SK-N-SH (cell line): ENCODE measurements at regions of chr4 and their contacts with region 1.

Region 1: GRCh38 chr4:173301518-173302201 is 32.5 kb downstream of the HMGB2 start:
- DNase-seq: peak; percentile 24
- H3K4me3 ChIP-seq: peak overlapping the region in 1 of 2 experiments; percentile 19; a peak in 1 of 4 replicates
- H3K27ac ChIP-seq: peak overlapping the region in 1 of 2 experiments; percentile 13; a peak in 1 of 4 replicates
- H3K4me1 ChIP-seq: peaks cover 0 to 5% of the 10 kb centered on the region in 2 experiments; a peak in 2 of 4 replicates
- H3K27me3 ChIP-seq: no peaks in the 10 kb centered on the region
- CTCF ChIP-seq: peak; percentile 86
- EP300 ChIP-seq: no peak
- RAD21 ChIP-seq: peak; percentile 78

Region 2: GRCh38 chr4:173019711-173020110 is 281.9 kb before region 1 on chr4:
- CTCF ChIA-PET with region 1: interaction called, 99 read pairs
- POLR2A ChIA-PET with region 1: no interaction called
- DNase-seq: no peak
- H3K4me3 ChIP-seq: no peak overlapping the region
- H3K27ac ChIP-seq: no peak overlapping the region
- H3K4me1 ChIP-seq: peaks cover 0 to 16% of the 10 kb centered on the region in 2 experiments; a peak in 1 of 4 replicates
- H3K27me3 ChIP-seq: no peaks in the 10 kb centered on the region
- CTCF ChIP-seq: no peak
- EP300 ChIP-seq: no peak
- RAD21 ChIP-seq: no peak

Region 3: DNA sequence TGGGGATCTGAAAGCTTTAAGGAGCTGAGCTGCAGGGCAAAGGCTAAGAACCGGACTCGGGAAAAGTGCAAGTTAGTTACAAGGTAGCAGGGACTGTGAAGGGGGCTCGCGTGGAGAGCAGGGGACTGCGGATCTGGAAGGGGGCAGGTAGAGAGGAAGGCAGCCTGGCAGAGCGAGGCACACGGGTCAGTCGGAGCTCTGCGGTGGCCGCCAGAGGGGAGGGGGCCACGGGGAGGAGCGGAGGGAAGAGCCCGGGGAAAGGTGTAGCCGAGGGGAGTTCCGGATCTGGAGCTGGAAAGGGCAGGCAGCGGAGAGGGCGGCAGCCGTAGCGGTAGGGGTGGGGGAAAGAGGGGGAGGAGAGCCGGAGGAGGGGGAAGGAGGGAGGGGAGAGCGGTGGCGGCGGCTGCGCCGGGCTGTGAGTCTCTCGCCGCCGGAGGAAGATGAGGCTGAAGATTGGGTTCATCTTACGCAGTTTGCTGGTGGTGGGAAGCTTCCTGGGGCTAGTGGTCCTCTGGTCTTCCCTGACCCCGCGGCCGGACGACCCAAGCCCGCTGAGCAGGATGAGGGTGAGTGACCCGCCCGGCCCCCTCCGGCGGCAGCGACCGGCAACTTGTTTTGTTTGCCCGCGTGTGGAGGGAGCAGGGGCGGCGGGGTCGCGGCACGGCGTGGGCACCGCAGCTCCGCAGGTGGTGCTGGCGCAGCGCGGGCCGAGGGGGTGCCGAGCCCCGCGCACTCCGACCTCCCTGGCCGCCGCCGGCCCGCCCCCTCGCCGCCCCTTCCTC is 133.1 kb before region 1 on chr4 and contains the start of gene GALNT7:
- CTCF ChIA-PET with region 1: interaction called, 10 read pairs
- POLR2A ChIA-PET with region 1: no interaction called
- DNase-seq: peak; percentile 92
- H3K4me3 ChIP-seq: peak within 1 kb of the TSS; percentile 66 to 99
- H3K27ac ChIP-seq: peak within 1 kb of the TSS; percentile 83 to 96
- H3K4me1 ChIP-seq: peaks cover 10 to 16% of the 10 kb centered on the region in 2 experiments; a peak in 3 of 4 replicates
- H3K27me3 ChIP-seq: no peaks in the 10 kb centered on the region
- CTCF ChIP-seq: no peak
- EP300 ChIP-seq: no peak
- RAD21 ChIP-seq: no peak
- polyA plus RNA-seq, gene GALNT7: 14.8 and 20.0 TPM in 2 replicates

Region 4: GRCh38 chr4:173257732-173258717 is 43.6 kb before region 1 on chr4:
- CTCF ChIA-PET with region 1: interaction called, 24 read pairs
- POLR2A ChIA-PET with region 1: no interaction called
- DNase-seq: peak; percentile 52
- H3K4me3 ChIP-seq: no peak overlapping the region
- H3K27ac ChIP-seq: no peak overlapping the region
- H3K4me1 ChIP-seq: peaks cover 3 to 8% of the 10 kb centered on the region in 2 experiments; a peak in 2 of 4 replicates
- H3K27me3 ChIP-seq: no peaks in the 10 kb centered on the region
- CTCF ChIP-seq: peak; percentile 96
- EP300 ChIP-seq: no peak
- RAD21 ChIP-seq: peak; percentile 98

Region 5: GRCh38 chr4:173270312-173271027 is 31.2 kb before region 1 on chr4:
- CTCF ChIA-PET with region 1: interaction called, 23 read pairs
- POLR2A ChIA-PET with region 1: no interaction called
- DNase-seq: peak; percentile 32
- H3K4me3 ChIP-seq: no peak overlapping the region
- H3K27ac ChIP-seq: peak overlapping the region in 1 of 2 experiments; percentile 53; a peak in 2 of 4 replicates
- H3K4me1 ChIP-seq: peaks cover 12 to 15% of the 10 kb centered on the region in 2 experiments; a peak in 3 of 4 replicates
- H3K27me3 ChIP-seq: no peaks in the 10 kb centered on the region
- CTCF ChIP-seq: no peak
- EP300 ChIP-seq: peak in 1 of 2 experiments; percentile 55; a peak in 2 of 4 replicates
- RAD21 ChIP-seq: no peak

Region 6: GRCh38 chr4:173288296-173288695 is 13.4 kb before region 1 on chr4:
- CTCF ChIA-PET with region 1: interaction called, 44 read pairs
- POLR2A ChIA-PET with region 1: no interaction called
- DNase-seq: peak; percentile 24
- H3K4me3 ChIP-seq: no peak overlapping the region; a peak in 1 of 4 replicates
- H3K27ac ChIP-seq: no peak overlapping the region
- H3K4me1 ChIP-seq: peaks cover 0 to 5% of the 10 kb centered on the region in 2 experiments; a peak in 1 of 4 replicates
- H3K27me3 ChIP-seq: no peaks in the 10 kb centered on the region
- CTCF ChIP-seq: peak; percentile 61
- EP300 ChIP-seq: no peak
- RAD21 ChIP-seq: peak; percentile 51

Region 7: DNA sequence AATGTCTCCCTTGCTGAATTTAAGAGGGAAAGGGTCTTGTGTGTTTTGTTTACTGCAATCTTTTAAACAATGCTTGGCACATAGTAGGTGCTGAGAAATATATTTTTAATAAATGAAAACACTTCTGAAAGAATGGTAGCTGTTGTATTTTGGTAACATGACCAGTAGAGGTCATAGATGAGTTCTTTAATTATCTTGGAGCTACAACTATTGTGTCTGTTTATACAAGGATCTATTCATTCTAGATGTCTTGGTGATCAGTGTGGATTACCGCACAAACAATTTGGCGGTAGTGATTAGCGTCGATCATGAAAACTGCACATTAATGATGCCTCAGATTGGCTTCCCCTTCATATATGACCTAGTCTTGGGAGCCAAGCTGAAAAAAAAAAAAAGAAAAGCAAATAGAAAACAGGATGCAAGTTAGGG is 118.7 kb after region 1 on chr4:
- CTCF ChIA-PET with region 1: interaction called, 10 read pairs
- POLR2A ChIA-PET with region 1: no interaction called
- DNase-seq: peak; percentile 34
- H3K4me3 ChIP-seq: no peak overlapping the region
- H3K27ac ChIP-seq: peak overlapping the region in 1 of 2 experiments; percentile 56; a peak in 2 of 4 replicates
- H3K4me1 ChIP-seq: peaks cover 0 to under 1% of the 10 kb centered on the region in 2 experiments; a peak in 1 of 4 replicates
- H3K27me3 ChIP-seq: no peaks in the 10 kb centered on the region
- CTCF ChIP-seq: peak; percentile 69
- EP300 ChIP-seq: no peak
- RAD21 ChIP-seq: peak; percentile 78

Region 8: GRCh38 chr4:173529477-173530325 is 228.0 kb after region 1 on chr4 and contains the start of gene HAND2:
- CTCF ChIA-PET with region 1: no interaction called
- POLR2A ChIA-PET with region 1: no interaction called
- DNase-seq: peak; percentile 91
- H3K4me3 ChIP-seq: peak within 1 kb of the TSS; percentile 61 to 92
- H3K27ac ChIP-seq: peak within 1 kb of the TSS; percentile 99
- H3K4me1 ChIP-seq: peaks cover 0 to 3% of the 10 kb centered on the region in 2 experiments; a peak in 2 of 4 replicates
- H3K27me3 ChIP-seq: no peaks in the 10 kb centered on the region
- CTCF ChIP-seq: no peak
- EP300 ChIP-seq: peak; percentile 16 to 25; a peak in 2 of 4 replicates
- RAD21 ChIP-seq: no peak
- polyA plus RNA-seq, gene HAND2: 94.2 and 106 TPM in 2 replicates